IMR-90 (cell line): ENCODE measurements at regions of chr4 and their contacts with region 1.

Region 1: GRCh38 chr4:25903900-25904747 is 9.9 kb upstream of the SMIM20 start:
- DNase-seq: no peak
- ATAC-seq: no peak
- H3K4me3 ChIP-seq: no peak overlapping the region
- H3K27ac ChIP-seq: no peak overlapping the region
- H3K4me1 ChIP-seq: peaks cover 3% of the 10 kb centered on the region
- H3K27me3 ChIP-seq: no peaks in the 10 kb centered on the region
- CTCF ChIP-seq: no peak
- POLR2A ChIP-seq: no peak
- RAD21 ChIP-seq: no peak

Region 2: DNA sequence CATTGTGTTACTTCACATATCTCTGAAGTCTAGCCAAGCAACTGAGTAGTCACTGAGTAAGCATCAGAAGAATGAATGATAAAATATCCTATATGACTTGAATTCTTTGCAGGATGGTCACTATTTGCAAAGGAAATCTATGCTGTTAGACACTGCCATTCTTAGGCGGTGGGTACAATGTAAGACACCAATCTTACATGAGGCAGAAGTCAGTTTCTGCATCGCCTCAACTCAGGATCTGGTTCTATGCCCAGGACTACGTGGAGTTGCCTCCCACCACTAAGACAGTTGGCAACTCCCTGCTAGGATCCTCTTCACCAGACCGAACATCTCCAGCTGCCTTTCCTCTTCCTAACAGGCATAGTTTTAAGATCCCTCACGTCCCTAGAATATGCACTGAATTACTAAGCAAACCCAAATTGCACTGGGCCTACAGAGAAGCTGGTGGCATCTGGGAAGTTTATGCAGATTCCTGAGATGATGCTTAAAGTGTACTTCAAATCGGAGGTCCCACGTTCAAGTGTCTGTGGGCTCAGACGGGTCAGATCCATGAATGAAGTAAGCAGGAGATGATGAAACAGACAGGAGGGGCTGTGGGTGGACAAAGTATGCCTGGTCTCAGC is 87.0 kb before region 1 on chr4:
- CTCF ChIA-PET with region 1: no interaction called
- POLR2A ChIA-PET with region 1: no interaction called
- dilution Hi-C with region 1: no loop called
- in situ Hi-C with region 1: no loop called
- intact Hi-C with region 1: no loop called
- DNase-seq: peak; percentile 86
- ATAC-seq: peak; percentile 69
- H3K4me3 ChIP-seq: peak overlapping the region; percentile 5; the same call in 1 of the 2 replicates
- H3K27ac ChIP-seq: peak overlapping the region; percentile 82
- H3K4me1 ChIP-seq: peaks cover 32% of the 10 kb centered on the region
- H3K27me3 ChIP-seq: no peaks in the 10 kb centered on the region
- CTCF ChIP-seq: no peak
- POLR2A ChIP-seq: no peak
- RAD21 ChIP-seq: peak; percentile 2; the same call in 1 of the 2 replicates

Region 3: GRCh38 chr4:25890571-25891485 is 13.3 kb before region 1 on chr4:
- CTCF ChIA-PET with region 1: no interaction called
- POLR2A ChIA-PET with region 1: no interaction called
- dilution Hi-C with region 1: no loop called
- in situ Hi-C with region 1: no loop called
- intact Hi-C with region 1: loop called (anchors 1 kb)
- DNase-seq: no peak
- ATAC-seq: no peak
- H3K4me3 ChIP-seq: no peak overlapping the region
- H3K27ac ChIP-seq: no peak overlapping the region
- H3K4me1 ChIP-seq: no peaks in the 10 kb centered on the region; the same call in 1 of the 2 replicates
- H3K27me3 ChIP-seq: no peaks in the 10 kb centered on the region
- CTCF ChIP-seq: no peak
- POLR2A ChIP-seq: no peak
- RAD21 ChIP-seq: no peak

Region 4: DNA sequence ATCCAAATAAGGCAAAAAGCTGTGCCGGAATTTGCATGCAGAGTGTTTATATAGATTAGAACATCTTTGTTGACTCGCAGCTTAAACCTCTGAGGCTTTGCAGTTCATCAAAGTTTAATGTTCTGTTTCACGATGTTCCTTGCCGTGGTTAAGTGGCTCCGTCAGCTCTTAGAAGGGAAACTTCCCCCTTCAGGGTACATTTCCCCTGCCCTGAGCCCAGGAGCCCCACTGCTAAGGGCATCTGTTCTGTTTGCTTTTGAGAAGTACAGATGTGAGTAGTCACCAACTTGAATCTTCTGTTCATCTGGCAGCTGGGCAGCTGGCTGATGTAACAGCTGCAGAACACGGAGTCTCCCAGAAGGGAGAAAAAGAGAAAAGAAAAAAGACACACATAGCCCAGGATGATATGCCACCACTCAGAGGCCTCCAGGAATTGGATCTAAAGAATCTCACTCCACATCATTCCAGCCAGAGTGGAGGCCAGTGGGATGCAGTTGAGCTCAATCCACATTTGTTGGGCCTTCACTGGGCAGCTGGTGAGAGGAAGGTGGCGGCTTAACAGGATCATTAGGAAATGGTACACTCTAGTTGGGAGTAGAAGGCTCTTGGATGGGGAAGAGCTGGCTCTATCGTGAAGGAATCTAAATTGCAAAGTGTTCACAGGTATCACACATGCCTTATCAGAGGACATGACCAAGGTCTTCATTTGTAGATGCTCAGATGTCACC is 238.0 kb after region 1 on chr4:
- CTCF ChIA-PET with region 1: no interaction called
- POLR2A ChIA-PET with region 1: no interaction called
- dilution Hi-C with region 1: no loop called
- in situ Hi-C with region 1: no loop called
- intact Hi-C with region 1: no loop called
- DNase-seq: peak; percentile 83
- ATAC-seq: peak; percentile 67
- H3K4me3 ChIP-seq: no peak overlapping the region
- H3K27ac ChIP-seq: peak overlapping the region; percentile 83
- H3K4me1 ChIP-seq: peaks cover 29% of the 10 kb centered on the region
- H3K27me3 ChIP-seq: no peaks in the 10 kb centered on the region
- CTCF ChIP-seq: no peak
- POLR2A ChIP-seq: no peak
- RAD21 ChIP-seq: 0 out of 2 replicates have a peak, but pooled peaks have one; percentile 5